PC-3 (cell line): ENCODE measurements at regions of chr18 and their contacts with region 1.

Region 1: GRCh38 chr18:21458310-21458709 is 142.2 kb downstream of the ESCO1 start:
- DNase-seq: no peak
- ATAC-seq: no peak
- H3K4me3 ChIP-seq: no peak overlapping the region
- H3K27ac ChIP-seq: no peak overlapping the region
- H3K4me1 ChIP-seq: peaks cover 10% of the 10 kb centered on the region
- H3K27me3 ChIP-seq: no peaks in the 10 kb centered on the region
- CTCF ChIP-seq: no peak

Region 2: GRCh38 chr18:22688877-22689496 is 1230.7 kb after region 1 on chr18:
- CTCF ChIA-PET with region 1: no interaction called
- POLR2A ChIA-PET with region 1: interaction called, 34 read pairs
- intact Hi-C with region 1: no loop called
- DNase-seq: no peak
- ATAC-seq: no peak
- H3K4me3 ChIP-seq: no peak overlapping the region
- H3K27ac ChIP-seq: no peak overlapping the region
- H3K4me1 ChIP-seq: peaks cover 24% of the 10 kb centered on the region
- H3K27me3 ChIP-seq: no peaks in the 10 kb centered on the region
- CTCF ChIP-seq: no peak